ENCODE measurements at regions of chr2 and their contacts with region 1.

Region 1: GRCh38 chr2:168025487-168026202 is 221.8 kb downstream of the STK39 start:
- DNase-seq: no peak
- ATAC-seq: no peak
- H3K4me3 ChIP-seq: no peak overlapping the region
- H3K4me3 Mint-ChIP-seq: no peak overlapping the region
- H3K27ac ChIP-seq: no peak overlapping the region
- H3K27ac Mint-ChIP-seq: no peak overlapping the region
- H3K4me1 ChIP-seq: no peaks in the 10 kb centered on the region
- H3K4me1 Mint-ChIP-seq: no peaks in the 10 kb centered on the region
- H3K27me3 ChIP-seq: no peaks in the 10 kb centered on the region
- H3K27me3 Mint-ChIP-seq: no peaks in the 10 kb centered on the region
- CTCF ChIP-seq: no peak

Region 2: GRCh38 chr2:167388497-167388896 is 637.1 kb before region 1 on chr2:
- CTCF ChIA-PET with region 1: no interaction called
- POLR2A ChIA-PET with region 1: no interaction called
- intact Hi-C with region 1: no loop called
- DNase-seq: no peak
- ATAC-seq: no peak
- H3K4me3 ChIP-seq: no peak overlapping the region
- H3K4me3 Mint-ChIP-seq: no peak overlapping the region
- H3K27ac ChIP-seq: no peak overlapping the region
- H3K27ac Mint-ChIP-seq: no peak overlapping the region
- H3K4me1 ChIP-seq: no peaks in the 10 kb centered on the region
- H3K4me1 Mint-ChIP-seq: no peaks in the 10 kb centered on the region
- H3K27me3 ChIP-seq: no peaks in the 10 kb centered on the region
- H3K27me3 Mint-ChIP-seq: no peaks in the 10 kb centered on the region
- CTCF ChIP-seq: no peak

Region 3: GRCh38 chr2:167827352-167828097 is 198.1 kb before region 1 on chr2:
- CTCF ChIA-PET with region 1: no interaction called
- POLR2A ChIA-PET with region 1: no interaction called
- intact Hi-C with region 1: no loop called
- DNase-seq: no peak
- ATAC-seq: no peak
- H3K4me3 ChIP-seq: no peak overlapping the region
- H3K4me3 Mint-ChIP-seq: no peak overlapping the region
- H3K27ac ChIP-seq: no peak overlapping the region
- H3K27ac Mint-ChIP-seq: no peak overlapping the region
- H3K4me1 ChIP-seq: no peaks in the 10 kb centered on the region
- H3K4me1 Mint-ChIP-seq: no peaks in the 10 kb centered on the region
- H3K27me3 ChIP-seq: no peaks in the 10 kb centered on the region
- H3K27me3 Mint-ChIP-seq: peaks cover 8% of the 10 kb centered on the region
- CTCF ChIP-seq: no peak

Region 4: GRCh38 chr2:167890739-167891138 is 134.9 kb before region 1 on chr2:
- CTCF ChIA-PET with region 1: no interaction called
- POLR2A ChIA-PET with region 1: no interaction called
- intact Hi-C with region 1: no loop called
- DNase-seq: no peak
- ATAC-seq: no peak
- H3K4me3 ChIP-seq: no peak overlapping the region
- H3K4me3 Mint-ChIP-seq: no peak overlapping the region
- H3K27ac ChIP-seq: no peak overlapping the region
- H3K27ac Mint-ChIP-seq: no peak overlapping the region
- H3K4me1 ChIP-seq: no peaks in the 10 kb centered on the region
- H3K4me1 Mint-ChIP-seq: no peaks in the 10 kb centered on the region
- H3K27me3 ChIP-seq: no peaks in the 10 kb centered on the region
- H3K27me3 Mint-ChIP-seq: peaks cover 19% of the 10 kb centered on the region
- CTCF ChIP-seq: no peak

Region 5: GRCh38 chr2:168060986-168061750 is 35.5 kb after region 1 on chr2:
- CTCF ChIA-PET with region 1: interaction called, 3 read pairs
- POLR2A ChIA-PET with region 1: no interaction called
- intact Hi-C with region 1: loop called in 1 of 2 experiments (anchors 5 kb)
- DNase-seq: no peak
- ATAC-seq: no peak
- H3K4me3 ChIP-seq: no peak overlapping the region
- H3K4me3 Mint-ChIP-seq: no peak overlapping the region
- H3K27ac ChIP-seq: no peak overlapping the region
- H3K27ac Mint-ChIP-seq: no peak overlapping the region
- H3K4me1 ChIP-seq: no peaks in the 10 kb centered on the region
- H3K4me1 Mint-ChIP-seq: peaks cover 6% of the 10 kb centered on the region
- H3K27me3 ChIP-seq: no peaks in the 10 kb centered on the region
- H3K27me3 Mint-ChIP-seq: no peaks in the 10 kb centered on the region
- CTCF ChIP-seq: no peak

Region 6: GRCh38 chr2:168097431-168097830 is 71.8 kb after region 1 on chr2:
- CTCF ChIA-PET with region 1: no interaction called
- POLR2A ChIA-PET with region 1: no interaction called
- intact Hi-C with region 1: no loop called
- DNase-seq: no peak
- ATAC-seq: no peak
- H3K4me3 ChIP-seq: no peak overlapping the region
- H3K4me3 Mint-ChIP-seq: no peak overlapping the region
- H3K27ac ChIP-seq: no peak overlapping the region
- H3K27ac Mint-ChIP-seq: no peak overlapping the region
- H3K4me1 ChIP-seq: no peaks in the 10 kb centered on the region
- H3K4me1 Mint-ChIP-seq: no peaks in the 10 kb centered on the region
- H3K27me3 ChIP-seq: no peaks in the 10 kb centered on the region
- H3K27me3 Mint-ChIP-seq: no peaks in the 10 kb centered on the region
- CTCF ChIP-seq: no peak

Measured in CD8-positive, alpha-beta T cell (primary cell).